ENCODE measurements at regions of chr10 and their contacts with region 1.

Region 1: DNA sequence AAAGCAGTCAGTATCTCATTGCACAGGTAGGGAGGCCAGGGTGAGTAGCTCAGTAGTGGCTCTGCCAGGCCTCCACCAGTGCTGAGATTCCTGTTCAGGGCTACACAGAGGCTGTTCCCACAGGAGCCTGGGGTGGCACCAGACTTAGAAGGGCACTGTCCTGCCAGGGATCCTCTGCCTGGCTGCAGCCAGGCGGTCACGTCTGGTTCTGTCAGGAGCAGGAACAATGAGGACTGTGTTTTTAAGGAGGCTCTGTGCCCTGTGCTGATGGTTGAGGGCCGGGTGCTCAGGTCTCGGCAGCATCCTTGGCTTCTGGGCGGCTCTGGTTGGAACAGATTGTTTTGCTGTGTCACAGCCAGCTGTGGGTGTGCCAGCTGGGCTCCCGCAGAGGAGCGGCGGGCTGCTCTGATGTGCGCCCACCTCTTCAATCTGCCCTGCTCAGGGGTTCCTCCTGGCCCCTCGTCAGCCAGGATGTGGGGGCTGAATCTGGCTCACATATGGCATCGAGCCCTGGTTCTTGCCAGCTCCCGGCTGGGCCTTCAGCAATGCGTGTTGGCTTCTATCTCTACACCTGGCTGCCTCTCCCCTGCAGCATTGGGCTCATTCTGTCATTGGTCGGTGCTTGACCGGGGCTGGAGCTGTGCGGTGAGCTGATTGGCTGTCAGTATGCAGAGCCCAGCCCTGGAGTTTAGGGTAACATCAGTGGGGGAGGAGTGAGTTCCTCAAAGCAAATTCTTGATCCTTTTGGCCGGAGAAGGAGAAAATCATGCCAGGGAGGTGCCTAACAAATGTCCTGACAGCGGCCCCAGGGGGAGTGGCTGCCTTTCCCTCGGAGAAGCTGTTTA is 41.2 kb downstream of the TACR2 start:
- DNase-seq: peak; percentile 45 to 51
- ATAC-seq: peak; percentile 64 to 83 (median 74)
- H3K4me3 ChIP-seq: no peak overlapping the region
- H3K27ac ChIP-seq: peak overlapping the region in 9 of 10 donors; percentile 14 to 84 (median 59)
- H3K4me1 ChIP-seq: peaks cover 23 to 50% (median 38%) of the 10 kb centered on the region in 9 donors
- H3K27me3 ChIP-seq: no peaks in the 10 kb centered on the region
- CTCF ChIP-seq: no peak

Region 2: DNA sequence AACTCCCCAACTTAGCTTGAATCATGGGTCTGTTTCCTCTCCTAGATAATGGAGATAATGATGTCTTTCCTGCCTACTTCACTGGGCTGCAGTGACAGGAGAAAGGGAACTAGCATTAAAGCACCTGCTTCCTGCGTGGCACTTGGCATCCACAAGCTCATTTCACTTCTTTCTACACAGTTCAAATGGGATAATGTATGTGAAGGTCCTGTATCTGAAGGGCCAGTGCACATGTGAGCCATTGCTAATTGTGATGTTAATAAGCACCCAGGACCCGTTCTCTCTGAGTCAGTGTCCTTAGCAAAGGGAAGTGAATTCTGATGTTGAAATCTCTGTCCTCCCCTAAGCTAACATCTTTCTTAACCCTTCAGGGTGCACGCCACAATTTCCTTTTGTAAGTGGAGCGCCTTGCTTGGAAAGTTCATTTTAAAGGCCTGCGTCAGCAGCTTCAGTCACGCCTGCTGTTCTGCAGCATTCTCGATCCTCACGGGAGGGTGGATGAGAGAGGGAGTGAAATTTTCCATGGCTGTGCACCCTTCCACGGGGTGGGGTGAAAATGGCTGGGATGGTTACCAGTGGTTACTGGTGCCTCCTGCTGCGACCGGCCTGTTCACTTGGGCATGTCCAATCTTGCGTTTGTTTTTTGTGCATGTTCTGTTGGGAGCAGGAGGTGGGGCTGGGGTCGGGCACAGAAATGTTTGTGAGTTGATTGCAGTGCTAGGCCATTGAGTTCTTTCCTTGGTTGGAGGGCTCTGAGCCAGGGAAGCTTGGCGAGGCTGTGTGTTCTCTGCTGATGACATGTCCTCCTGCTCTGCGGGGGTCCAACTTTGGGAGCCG is 38.0 kb before region 1 on chr10:
- intact Hi-C with region 1: loop called in 2 of 10 experiments (anchors 5 kb)
- DNase-seq: peak; percentile 33 to 53
- ATAC-seq: peak in 5 of 8 donors; percentile 11 to 49 (median 28)
- H3K4me3 ChIP-seq: peak overlapping the region in 1 of 10 donors; percentile 15
- H3K27ac ChIP-seq: peak overlapping the region; percentile 41 to 89 (median 70)
- H3K4me1 ChIP-seq: peaks cover 49 to 100% (median 87%) of the 10 kb centered on the region in 9 donors
- H3K27me3 ChIP-seq: no peaks in the 10 kb centered on the region
- CTCF ChIP-seq: no peak